MCF 10A (cell line): ENCODE measurements at regions of chr16 and their contacts with region 1.

Region 1: GRCh38 chr16:73878611-73879010 is 418.0 kb upstream of the PSMD7 start:
- DNase-seq: peak; percentile 64
- H3K4me3 Mint-ChIP-seq: no peak overlapping the region
- H3K27ac Mint-ChIP-seq: no peak overlapping the region
- H3K4me1 Mint-ChIP-seq: no peaks in the 10 kb centered on the region
- H3K27me3 Mint-ChIP-seq: peaks cover 83% of the 10 kb centered on the region
- CTCF ChIP-seq: peak; percentile 60

Region 2: GRCh38 chr16:72124761-72125634 is 1753.6 kb before region 1 on chr16:
- CTCF ChIA-PET with region 1: interaction called, 16 read pairs
- POLR2A ChIA-PET with region 1: no interaction called
- intact Hi-C with region 1: loop called (anchors 5 kb)
- DNase-seq: peak; percentile 71
- H3K4me3 Mint-ChIP-seq: no peak overlapping the region
- H3K27ac Mint-ChIP-seq: no peak overlapping the region
- H3K4me1 Mint-ChIP-seq: no peaks in the 10 kb centered on the region
- H3K27me3 Mint-ChIP-seq: no peaks in the 10 kb centered on the region
- CTCF ChIP-seq: peak; percentile 73

Region 3: DNA sequence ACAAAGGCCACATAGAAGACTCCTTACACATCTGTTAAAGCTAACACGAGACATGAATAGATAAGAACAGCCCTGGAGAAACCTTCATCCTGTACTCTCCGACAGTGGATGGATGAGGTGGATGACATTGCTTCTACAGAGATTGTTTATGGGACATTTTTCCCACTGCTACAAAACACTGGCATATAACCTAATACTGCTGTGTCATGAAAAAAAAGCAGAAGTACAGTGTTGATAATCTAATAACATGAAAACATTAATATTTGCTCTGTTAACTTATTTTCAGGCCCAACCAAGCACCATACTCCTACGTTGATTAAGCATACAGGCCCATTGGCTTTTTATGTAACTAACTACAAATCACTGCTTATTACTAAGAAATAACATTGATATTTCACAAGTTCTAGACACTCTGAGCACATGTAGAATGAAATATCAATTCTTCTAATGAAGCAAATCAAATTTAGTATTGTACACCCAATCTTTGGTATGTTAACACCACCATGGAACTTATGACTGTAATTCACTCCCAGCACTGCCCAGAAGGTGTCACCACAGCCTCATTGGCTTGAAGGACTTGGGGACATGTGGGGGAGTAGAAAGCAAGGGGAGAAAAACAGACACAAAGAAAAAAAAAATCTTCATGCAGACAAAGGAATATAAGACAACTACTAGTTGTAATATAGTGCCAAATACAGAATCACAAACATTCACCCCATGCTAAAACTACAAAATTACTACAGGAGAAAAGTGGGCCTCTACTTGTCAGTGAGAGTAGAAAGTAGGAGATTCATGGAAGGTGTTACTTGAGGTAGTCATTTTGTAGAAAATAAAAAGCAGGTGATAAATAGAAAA is 1376.6 kb before region 1 on chr16:
- CTCF ChIA-PET with region 1: interaction called, 8 read pairs
- POLR2A ChIA-PET with region 1: no interaction called
- intact Hi-C with region 1: loop called (anchors 1 kb)
- DNase-seq: peak; percentile 71
- H3K4me3 Mint-ChIP-seq: no peak overlapping the region
- H3K27ac Mint-ChIP-seq: no peak overlapping the region
- H3K4me1 Mint-ChIP-seq: peaks cover 6% of the 10 kb centered on the region
- H3K27me3 Mint-ChIP-seq: no peaks in the 10 kb centered on the region
- CTCF ChIP-seq: peak; percentile 93

Region 4: DNA sequence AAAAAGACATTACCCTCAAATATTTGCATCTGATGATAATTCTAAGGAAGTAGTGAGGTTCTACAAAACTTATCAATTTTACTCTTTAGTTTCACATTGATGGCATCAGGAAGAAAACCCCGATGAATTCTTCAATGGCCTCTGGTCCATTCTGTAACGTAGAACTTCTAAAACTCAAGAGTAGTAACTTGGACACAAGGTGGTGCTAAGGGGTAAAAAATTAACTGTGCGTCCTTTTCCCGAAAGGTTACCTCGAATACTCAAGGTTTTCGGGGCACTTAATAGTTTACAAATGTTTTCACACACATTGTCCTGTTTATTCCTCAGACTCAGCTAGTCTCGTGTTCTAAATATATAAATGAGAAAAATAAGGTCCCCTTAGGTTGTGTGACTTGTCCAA is 313.3 kb before region 1 on chr16:
- CTCF ChIA-PET with region 1: interaction called, 112 read pairs
- POLR2A ChIA-PET with region 1: interaction called, 4 read pairs
- intact Hi-C with region 1: loop called (anchors 1 kb)
- DNase-seq: peak; percentile 43
- H3K4me3 Mint-ChIP-seq: no peak overlapping the region
- H3K27ac Mint-ChIP-seq: no peak overlapping the region
- H3K4me1 Mint-ChIP-seq: no peaks in the 10 kb centered on the region
- H3K27me3 Mint-ChIP-seq: peaks cover 94% of the 10 kb centered on the region
- CTCF ChIP-seq: peak; percentile 43

Region 5: DNA sequence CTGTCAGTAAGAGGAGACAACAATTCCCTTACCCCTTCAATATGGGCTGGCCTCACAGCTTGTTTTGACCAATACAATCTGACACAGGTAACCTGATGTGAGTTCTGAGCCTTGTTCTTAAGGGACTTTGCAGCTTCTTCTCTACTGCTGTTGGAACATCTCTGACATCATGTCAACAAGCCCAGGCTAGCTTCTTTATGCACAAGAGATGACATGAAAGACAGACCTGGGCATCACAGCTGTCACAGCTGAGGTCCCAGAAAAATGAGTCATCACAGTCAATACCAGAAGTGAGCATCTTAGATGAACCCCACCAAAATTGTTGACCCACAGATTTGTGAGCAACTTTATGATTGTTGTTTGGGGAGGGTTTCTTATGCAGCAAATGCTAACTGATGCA is 13.7 kb before region 1 on chr16:
- CTCF ChIA-PET with region 1: interaction called, 17 read pairs
- POLR2A ChIA-PET with region 1: no interaction called
- intact Hi-C with region 1: no loop called
- DNase-seq: peak; percentile 14
- H3K4me3 Mint-ChIP-seq: no peak overlapping the region
- H3K27ac Mint-ChIP-seq: no peak overlapping the region
- H3K4me1 Mint-ChIP-seq: no peaks in the 10 kb centered on the region
- H3K27me3 Mint-ChIP-seq: peaks cover 62% of the 10 kb centered on the region
- CTCF ChIP-seq: no peak

Region 6: GRCh38 chr16:73923951-73924350 is 45.3 kb after region 1 on chr16:
- CTCF ChIA-PET with region 1: no interaction called
- POLR2A ChIA-PET with region 1: no interaction called
- intact Hi-C with region 1: no loop called
- DNase-seq: no peak
- H3K4me3 Mint-ChIP-seq: no peak overlapping the region
- H3K27ac Mint-ChIP-seq: no peak overlapping the region
- H3K4me1 Mint-ChIP-seq: no peaks in the 10 kb centered on the region
- H3K27me3 Mint-ChIP-seq: peaks cover 89% of the 10 kb centered on the region
- CTCF ChIP-seq: no peak

Region 7: GRCh38 chr16:73956587-73957494 is 78.2 kb after region 1 on chr16:
- CTCF ChIA-PET with region 1: interaction called, 14 read pairs
- POLR2A ChIA-PET with region 1: no interaction called
- intact Hi-C with region 1: loop called (anchors 1 kb)
- DNase-seq: peak; percentile 65
- H3K4me3 Mint-ChIP-seq: no peak overlapping the region
- H3K27ac Mint-ChIP-seq: no peak overlapping the region
- H3K4me1 Mint-ChIP-seq: no peaks in the 10 kb centered on the region
- H3K27me3 Mint-ChIP-seq: peaks cover 88% of the 10 kb centered on the region
- CTCF ChIP-seq: peak; percentile 82

Region 8: GRCh38 chr16:73966851-73967250 is 88.2 kb after region 1 on chr16:
- CTCF ChIA-PET with region 1: no interaction called
- POLR2A ChIA-PET with region 1: no interaction called
- intact Hi-C with region 1: no loop called
- DNase-seq: no peak
- H3K4me3 Mint-ChIP-seq: no peak overlapping the region
- H3K27ac Mint-ChIP-seq: no peak overlapping the region
- H3K4me1 Mint-ChIP-seq: no peaks in the 10 kb centered on the region
- H3K27me3 Mint-ChIP-seq: peaks cover 78% of the 10 kb centered on the region
- CTCF ChIP-seq: no peak